ENCODE measurements at regions of chr16 and their contacts with region 1.

Region 1: GRCh38 chr16:88700636-88701482 is 5.3 kb downstream of the RNF166 start:
- DNase-seq: peak; percentile 86
- ATAC-seq: peak; percentile 81
- H3K4me3 Mint-ChIP-seq: peak overlapping the region; percentile 81
- H3K27ac Mint-ChIP-seq: peak overlapping the region; percentile 90
- H3K4me1 Mint-ChIP-seq: peaks cover 73% of the 10 kb centered on the region
- H3K27me3 Mint-ChIP-seq: no peaks in the 10 kb centered on the region
- CTCF ChIP-seq: no peak

Region 2: DNA sequence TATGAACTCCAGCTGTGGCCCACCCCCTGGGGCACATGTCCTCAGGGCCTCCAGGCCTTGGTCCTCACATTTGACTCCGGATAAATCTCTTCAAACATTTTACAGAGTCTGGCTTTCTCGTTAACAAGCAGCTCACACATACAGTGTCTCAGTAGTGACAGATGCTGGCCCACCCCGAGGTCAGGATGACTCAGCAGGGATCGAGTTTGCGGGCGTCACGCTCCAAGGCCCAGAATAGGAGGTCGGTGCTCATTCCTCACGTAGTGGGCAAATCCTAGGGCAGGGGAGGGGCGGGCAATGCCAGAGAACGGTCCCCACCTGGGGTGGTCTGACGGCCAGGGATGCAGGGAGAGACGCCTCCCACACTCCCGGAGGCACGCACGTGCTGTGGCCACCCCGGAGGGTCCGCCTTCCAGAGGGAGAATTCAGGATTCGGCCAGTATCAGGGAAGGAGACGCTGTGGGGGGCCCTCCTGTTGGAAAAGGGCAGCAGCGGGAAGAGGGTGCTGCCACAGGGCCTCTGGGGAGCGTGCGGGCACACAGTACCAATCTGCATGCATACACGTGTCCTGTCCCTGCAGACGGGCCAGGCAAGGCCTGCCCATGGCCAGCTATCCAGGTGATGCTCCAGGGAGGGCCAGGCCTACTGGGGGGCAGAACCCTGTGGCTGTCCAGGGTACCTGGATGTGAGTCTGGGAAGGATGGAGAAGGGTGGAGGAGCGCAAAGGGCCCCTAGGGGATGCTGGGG is 840.1 kb before region 1 on chr16:
- CTCF ChIA-PET with region 1: no interaction called
- POLR2A ChIA-PET with region 1: no interaction called
- intact Hi-C with region 1: loop called (anchors 5 kb)
- DNase-seq: no peak
- ATAC-seq: peak; percentile 40
- H3K4me3 Mint-ChIP-seq: no peak overlapping the region
- H3K27ac Mint-ChIP-seq: peak overlapping the region; percentile 56
- H3K4me1 Mint-ChIP-seq: peaks cover 30% of the 10 kb centered on the region
- H3K27me3 Mint-ChIP-seq: no peaks in the 10 kb centered on the region
- CTCF ChIP-seq: no peak

Region 3: GRCh38 chr16:87966685-87967185 is 734.1 kb before region 1 on chr16:
- CTCF ChIA-PET with region 1: no interaction called
- POLR2A ChIA-PET with region 1: no interaction called
- intact Hi-C with region 1: no loop called
- DNase-seq: no peak
- ATAC-seq: no peak
- H3K4me3 Mint-ChIP-seq: peak overlapping the region; percentile 52
- H3K27ac Mint-ChIP-seq: peak overlapping the region; percentile 50
- H3K4me1 Mint-ChIP-seq: peaks cover 65% of the 10 kb centered on the region
- H3K27me3 Mint-ChIP-seq: no peaks in the 10 kb centered on the region
- CTCF ChIP-seq: no peak

Region 4: GRCh38 chr16:88569985-88570690 is 130.7 kb before region 1 on chr16 and contains the start of gene ZC3H18:
- CTCF ChIA-PET with region 1: no interaction called
- POLR2A ChIA-PET with region 1: interaction called, 12 read pairs
- intact Hi-C with region 1: loop called (anchors 1 kb)
- DNase-seq: peak; percentile 99
- ATAC-seq: peak; percentile 92
- H3K4me3 Mint-ChIP-seq: peak within 1 kb of the TSS; percentile 86
- H3K27ac Mint-ChIP-seq: peak within 1 kb of the TSS; percentile 76
- H3K4me1 Mint-ChIP-seq: peaks cover 25% of the 10 kb centered on the region
- H3K27me3 Mint-ChIP-seq: no peaks in the 10 kb centered on the region
- CTCF ChIP-seq: no peak
- total RNA-seq, gene ZC3H18: 61.7 and 74.2 TPM in 2 replicates

Region 5: DNA sequence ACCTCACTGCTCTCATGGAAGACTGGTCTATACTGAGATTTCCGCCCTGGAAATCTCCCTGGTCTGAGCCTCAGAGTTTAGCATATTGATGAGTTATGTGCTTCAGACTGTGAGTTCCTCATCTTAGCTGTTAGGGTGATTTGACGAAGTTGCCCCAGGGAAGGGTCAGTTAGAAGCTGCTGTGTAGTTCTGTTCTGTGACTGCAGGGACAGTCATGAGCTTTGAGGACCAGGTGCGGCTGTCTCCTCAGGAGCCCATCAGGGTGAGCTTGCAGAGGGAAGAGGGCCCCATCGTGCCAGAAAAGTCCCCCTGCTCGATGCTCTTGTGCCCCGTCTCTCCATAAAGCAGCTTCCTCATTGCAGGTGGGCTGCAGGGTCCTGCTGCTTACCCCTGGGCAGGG is 90.8 kb before region 1 on chr16:
- CTCF ChIA-PET with region 1: no interaction called
- POLR2A ChIA-PET with region 1: no interaction called
- intact Hi-C with region 1: no loop called
- DNase-seq: no peak
- ATAC-seq: no peak
- H3K4me3 Mint-ChIP-seq: no peak overlapping the region
- H3K27ac Mint-ChIP-seq: no peak overlapping the region
- H3K4me1 Mint-ChIP-seq: peaks cover 18% of the 10 kb centered on the region
- H3K27me3 Mint-ChIP-seq: no peaks in the 10 kb centered on the region
- CTCF ChIP-seq: no peak

Region 6: GRCh38 chr16:88662843-88663606 is 37.8 kb before region 1 on chr16 and contains the start of gene MVD:
- CTCF ChIA-PET with region 1: interaction called, 3 read pairs
- POLR2A ChIA-PET with region 1: interaction called, 10 read pairs
- intact Hi-C with region 1: loop called (anchors 2 kb)
- DNase-seq: peak; percentile 89
- ATAC-seq: peak; percentile 94
- H3K4me3 Mint-ChIP-seq: peak within 1 kb of the TSS; percentile 94
- H3K27ac Mint-ChIP-seq: peak within 1 kb of the TSS; percentile 90
- H3K4me1 Mint-ChIP-seq: peaks cover 31% of the 10 kb centered on the region
- H3K27me3 Mint-ChIP-seq: no peaks in the 10 kb centered on the region
- CTCF ChIP-seq: no peak
- total RNA-seq, gene MVD: 115 and 140 TPM in 2 replicates

Region 7: DNA sequence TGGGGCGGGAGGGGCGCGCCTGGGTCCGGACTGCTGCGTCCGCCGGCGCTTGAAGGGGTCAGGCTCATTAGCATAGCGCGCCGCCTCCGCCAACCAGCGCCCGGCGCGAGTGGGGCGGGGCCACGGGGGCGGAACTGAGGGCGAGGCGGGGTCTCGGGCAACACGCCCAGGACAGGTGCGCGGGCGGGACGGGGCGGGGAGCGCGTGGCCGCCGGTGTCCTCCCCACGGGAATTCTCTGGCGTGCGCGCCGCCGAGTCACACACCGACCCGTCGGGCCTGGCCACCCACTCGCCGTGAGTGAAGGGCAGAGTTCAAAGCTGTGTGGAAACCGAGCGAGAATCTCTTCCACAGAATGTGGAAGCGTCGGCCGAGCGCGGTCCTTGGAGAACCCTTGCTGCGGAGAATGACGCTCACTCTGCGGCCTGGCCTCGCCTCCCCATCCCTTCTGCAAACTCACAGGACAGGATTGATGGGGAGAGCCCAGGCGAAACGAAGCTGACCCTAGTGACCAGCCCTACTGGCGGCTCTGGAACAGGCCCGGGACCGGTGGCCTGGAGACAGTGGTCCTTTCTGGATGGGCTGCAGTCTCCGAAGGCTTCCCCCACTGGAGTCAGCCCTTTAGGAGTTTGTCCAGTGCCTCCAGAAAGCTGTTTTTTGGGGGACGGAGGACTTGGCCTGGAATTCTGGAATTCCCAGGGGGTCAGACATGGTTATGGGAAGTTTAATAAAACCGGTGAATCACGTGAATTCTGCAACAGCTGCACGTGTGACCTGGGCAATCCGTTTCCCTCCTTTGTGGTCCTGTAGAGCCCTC is 14.2 kb before region 1 on chr16 and contains the start of gene SNAI3:
- CTCF ChIA-PET with region 1: interaction called, 17 read pairs
- POLR2A ChIA-PET with region 1: interaction called, 24 read pairs
- intact Hi-C with region 1: loop called (anchors 1 kb)
- DNase-seq: peak; percentile 94
- ATAC-seq: peak; percentile 74
- H3K4me3 Mint-ChIP-seq: peak within 1 kb of the TSS; percentile 83
- H3K27ac Mint-ChIP-seq: no peak within 1 kb of the TSS
- H3K4me1 Mint-ChIP-seq: peaks cover 46% of the 10 kb centered on the region
- H3K27me3 Mint-ChIP-seq: no peaks in the 10 kb centered on the region
- CTCF ChIP-seq: no peak
- total RNA-seq, gene SNAI3: 1.5 and 2.7 TPM in 2 replicates

Region 8: GRCh38 chr16:89764711-89765201 is 1063.9 kb after region 1 on chr16:
- CTCF ChIA-PET with region 1: no interaction called
- POLR2A ChIA-PET with region 1: interaction called, 14 read pairs
- intact Hi-C with region 1: no loop called
- DNase-seq: peak; percentile 62
- ATAC-seq: peak; percentile 83
- H3K4me3 Mint-ChIP-seq: peak overlapping the region; percentile 88
- H3K27ac Mint-ChIP-seq: peak overlapping the region; percentile 95
- H3K4me1 Mint-ChIP-seq: peaks cover 69% of the 10 kb centered on the region
- H3K27me3 Mint-ChIP-seq: no peaks in the 10 kb centered on the region
- CTCF ChIP-seq: no peak

Measured in activated B cell treated with CpG ODN at 0.5 μM for 24 hours (primary cell).